Heart right ventricle (tissue), 16 donors: ENCODE measurements at regions of chr22 and their contacts with region 1.

Region 1: GRCh38 chr22:17258015-17258787 is 39.0 kb upstream of the ADA2 start:
- DNase-seq: peak; percentile 61 to 80
- ATAC-seq: peak; percentile 67 to 94 (median 90)
- H3K4me3 ChIP-seq: peak overlapping the region in 7 of 10 donors; percentile 10 to 39 (median 20)
- H3K27ac ChIP-seq: peak overlapping the region in 8 of 10 donors; percentile 8 to 70 (median 46)
- H3K4me1 ChIP-seq: peaks cover 0 to 21% (median 8%) of the 10 kb centered on the region in 9 donors
- H3K27me3 ChIP-seq: peaks cover 0 to 4% (median 0%) of the 10 kb centered on the region in 7 donors
- CTCF ChIP-seq: no peak

Region 2: DNA sequence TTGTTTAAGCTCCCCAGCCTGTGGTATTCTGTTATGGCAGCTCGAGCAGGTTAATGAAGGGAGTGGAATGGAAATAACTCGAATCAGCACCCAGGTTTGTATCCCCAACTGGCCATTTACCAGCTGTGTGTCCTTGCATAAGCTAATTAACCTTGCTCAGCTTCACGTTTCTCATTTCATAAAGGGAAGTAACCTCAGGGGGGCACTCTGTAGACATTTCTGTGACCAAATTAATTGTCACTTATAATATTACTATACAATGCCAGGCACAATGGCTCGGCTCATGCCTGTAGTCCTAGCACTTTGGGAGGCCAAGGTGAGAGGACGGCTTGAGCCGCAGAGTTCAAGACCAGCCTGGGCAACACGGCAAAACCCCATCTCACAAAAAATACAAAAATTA is 52.8 kb before region 1 on chr22:
- intact Hi-C with region 1: loop called in 1 of 10 experiments (anchors 5 kb)
- DNase-seq: no peak
- ATAC-seq: no peak
- H3K4me3 ChIP-seq: no peak overlapping the region
- H3K27ac ChIP-seq: no peak overlapping the region
- H3K4me1 ChIP-seq: no peaks in the 10 kb centered on the region
- H3K27me3 ChIP-seq: peaks cover 0 to 5% (median 0%) of the 10 kb centered on the region in 7 donors
- CTCF ChIP-seq: peak in 2 of 9 donors; percentile 6 to 29